ENCODE measurements at regions of chr19 and their contacts with region 1.

Region 1: GRCh38 chr19:10565567-10566407 is at the start of gene KRI1:
- DNase-seq: peak; percentile 97 to 100 (median 99)
- ATAC-seq: peak; percentile 54
- H3K4me3 ChIP-seq: peak within 1 kb of the TSS; percentile 95 to 97
- H3K4me3 Mint-ChIP-seq: peak within 1 kb of the TSS; percentile 98
- H3K27ac ChIP-seq: peak within 1 kb of the TSS; percentile 83 to 85
- H3K27ac Mint-ChIP-seq: peak within 1 kb of the TSS; percentile 95
- H3K4me1 ChIP-seq: peaks cover 28% of the 10 kb centered on the region
- H3K4me1 Mint-ChIP-seq: peaks cover 48% of the 10 kb centered on the region
- H3K27me3 ChIP-seq: no peaks in the 10 kb centered on the region
- H3K27me3 Mint-ChIP-seq: no peaks in the 10 kb centered on the region
- CTCF ChIP-seq: no peak
- total RNA-seq, gene KRI1: 29.8 to 33.9 TPM

Region 2: DNA sequence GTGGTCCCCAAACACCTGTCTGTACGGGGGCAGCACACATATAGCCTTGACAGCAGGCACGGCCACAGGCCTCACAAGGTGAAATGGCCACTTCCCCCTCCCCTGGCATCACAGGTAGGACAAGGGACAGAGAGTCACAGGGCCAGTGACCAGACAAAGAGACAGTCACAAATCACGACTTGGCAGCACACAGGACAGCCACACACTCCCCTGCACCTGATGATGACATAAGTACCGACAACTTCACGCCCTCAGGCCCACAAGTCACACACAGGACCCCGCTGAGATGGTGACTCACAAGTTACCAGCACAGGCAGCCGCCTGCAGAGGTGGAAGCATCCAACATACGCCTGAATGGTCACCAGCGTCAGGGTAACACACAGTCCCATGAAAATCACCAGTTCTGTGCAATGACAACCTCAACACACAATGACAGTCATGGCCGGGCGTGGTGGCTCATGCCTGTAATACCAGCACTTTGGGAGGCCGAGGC is 202.0 kb before region 1 on chr19:
- CTCF ChIA-PET with region 1: no interaction called
- POLR2A ChIA-PET with region 1: no interaction called
- intact Hi-C with region 1: no loop called
- DNase-seq: no peak
- ATAC-seq: no peak
- H3K4me3 ChIP-seq: no peak overlapping the region
- H3K4me3 Mint-ChIP-seq: no peak overlapping the region
- H3K27ac ChIP-seq: no peak overlapping the region
- H3K27ac Mint-ChIP-seq: no peak overlapping the region
- H3K4me1 ChIP-seq: no peaks in the 10 kb centered on the region
- H3K4me1 Mint-ChIP-seq: no peaks in the 10 kb centered on the region
- H3K27me3 ChIP-seq: no peaks in the 10 kb centered on the region
- H3K27me3 Mint-ChIP-seq: no peaks in the 10 kb centered on the region
- CTCF ChIP-seq: no peak

Region 3: DNA sequence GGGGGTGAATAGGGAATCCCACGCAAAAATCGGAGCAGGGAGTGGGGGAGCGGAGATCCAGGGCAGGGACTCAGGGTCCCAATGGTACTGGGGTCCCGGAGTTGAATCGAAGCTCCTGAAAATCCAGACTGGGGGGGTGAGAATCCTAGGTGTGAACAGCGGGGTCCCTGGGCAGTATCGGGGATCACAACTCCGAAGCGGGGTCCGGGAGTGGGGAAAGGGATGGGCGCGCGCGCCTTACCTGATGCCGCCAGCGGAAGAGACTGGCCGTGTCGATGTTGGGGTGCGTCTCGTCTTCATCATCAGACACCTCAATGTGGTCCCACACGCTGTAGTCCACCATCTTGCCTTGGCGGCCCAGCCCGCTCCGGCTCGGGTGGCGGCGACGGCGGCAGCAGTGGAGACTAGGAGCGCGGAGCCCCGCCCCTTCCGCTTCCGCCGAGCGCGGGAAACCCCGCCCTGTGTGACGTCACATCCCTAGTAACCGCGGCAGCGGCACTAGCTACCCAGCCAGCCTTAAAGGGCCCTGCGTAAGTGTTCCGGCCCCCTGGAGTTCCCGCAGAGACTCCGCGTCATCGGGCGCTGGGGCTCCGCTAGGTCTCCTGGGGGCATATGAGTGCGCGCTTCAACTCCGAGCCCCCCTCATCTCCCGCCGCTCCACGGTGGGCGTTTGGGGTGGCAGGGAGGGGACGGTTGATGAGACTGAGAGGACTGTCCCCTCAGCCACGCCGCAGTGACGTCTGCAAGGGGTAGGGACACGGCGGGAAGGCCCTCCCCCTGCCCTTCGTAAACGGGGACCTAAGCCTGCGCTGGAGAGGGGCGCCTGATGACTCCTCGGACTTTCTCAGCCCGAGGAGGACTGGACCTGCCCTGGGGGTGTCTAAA is 162.4 kb before region 1 on chr19 and contains the start of gene CDC37:
- CTCF ChIA-PET with region 1: no interaction called
- POLR2A ChIA-PET with region 1: interaction called, 4 read pairs
- intact Hi-C with region 1: loop called (anchors 2 kb)
- DNase-seq: peak; percentile 96 to 99 (median 98)
- ATAC-seq: peak; percentile 72
- H3K4me3 ChIP-seq: peak within 1 kb of the TSS; percentile 92 to 99
- H3K4me3 Mint-ChIP-seq: peak within 1 kb of the TSS; percentile 95
- H3K27ac ChIP-seq: peak within 1 kb of the TSS; percentile 93 to 95
- H3K27ac Mint-ChIP-seq: peak within 1 kb of the TSS; percentile 94
- H3K4me1 ChIP-seq: peaks cover 73% of the 10 kb centered on the region
- H3K4me1 Mint-ChIP-seq: peaks cover 67% of the 10 kb centered on the region
- H3K27me3 ChIP-seq: peaks cover 0 to 3% of the 10 kb centered on the region in 2 experiments
- H3K27me3 Mint-ChIP-seq: no peaks in the 10 kb centered on the region
- CTCF ChIP-seq: no peak
- total RNA-seq, gene CDC37: 195 to 196 TPM

Region 4: GRCh38 chr19:10543420-10544241 is 22.2 kb before region 1 on chr19 and contains the start of gene ATG4D:
- CTCF ChIA-PET with region 1: interaction called, 55 read pairs
- POLR2A ChIA-PET with region 1: interaction called, 6 read pairs
- intact Hi-C with region 1: loop called (anchors 1 kb)
- DNase-seq: peak; percentile 66 to 91 (median 84)
- ATAC-seq: peak; percentile 86
- H3K4me3 ChIP-seq: peak within 1 kb of the TSS; percentile 82 to 90
- H3K4me3 Mint-ChIP-seq: peak within 1 kb of the TSS; percentile 88
- H3K27ac ChIP-seq: peak within 1 kb of the TSS; percentile 63 to 66
- H3K27ac Mint-ChIP-seq: peak within 1 kb of the TSS; percentile 91
- H3K4me1 ChIP-seq: peaks cover 17% of the 10 kb centered on the region
- H3K4me1 Mint-ChIP-seq: peaks cover 19% of the 10 kb centered on the region
- H3K27me3 ChIP-seq: no peaks in the 10 kb centered on the region
- H3K27me3 Mint-ChIP-seq: peaks cover 7% of the 10 kb centered on the region
- CTCF ChIP-seq: no peak
- total RNA-seq, gene ATG4D: 82.0 to 91.1 TPM

Region 5: GRCh38 chr19:10602330-10603083 is 36.7 kb after region 1 on chr19:
- CTCF ChIA-PET with region 1: no interaction called
- POLR2A ChIA-PET with region 1: interaction called, 4 read pairs
- intact Hi-C with region 1: loop called (anchors 1 to 2 kb)
- DNase-seq: peak; percentile 79 to 94 (median 86)
- ATAC-seq: peak; percentile 82
- H3K4me3 ChIP-seq: peak overlapping the region; percentile 91 to 99
- H3K4me3 Mint-ChIP-seq: peak overlapping the region; percentile 96
- H3K27ac ChIP-seq: peak overlapping the region; percentile 99 to 100
- H3K27ac Mint-ChIP-seq: peak overlapping the region; percentile 99
- H3K4me1 ChIP-seq: peaks cover 38% of the 10 kb centered on the region
- H3K4me1 Mint-ChIP-seq: peaks cover 29% of the 10 kb centered on the region
- H3K27me3 ChIP-seq: no peaks in the 10 kb centered on the region
- H3K27me3 Mint-ChIP-seq: no peaks in the 10 kb centered on the region
- CTCF ChIP-seq: no peak

Region 6: GRCh38 chr19:10615429-10616023 is 49.7 kb after region 1 on chr19:
- CTCF ChIA-PET with region 1: no interaction called
- POLR2A ChIA-PET with region 1: no interaction called
- intact Hi-C with region 1: no loop called
- DNase-seq: peak in 1 of 9 experiments; percentile 43
- ATAC-seq: no peak
- H3K4me3 ChIP-seq: no peak overlapping the region
- H3K4me3 Mint-ChIP-seq: peak overlapping the region; percentile 65
- H3K27ac ChIP-seq: peak overlapping the region in 1 of 2 experiments; percentile 65
- H3K27ac Mint-ChIP-seq: peak overlapping the region; percentile 90
- H3K4me1 ChIP-seq: peaks cover 41% of the 10 kb centered on the region
- H3K4me1 Mint-ChIP-seq: peaks cover 43% of the 10 kb centered on the region
- H3K27me3 ChIP-seq: no peaks in the 10 kb centered on the region
- H3K27me3 Mint-ChIP-seq: no peaks in the 10 kb centered on the region
- CTCF ChIP-seq: no peak

Region 7: DNA sequence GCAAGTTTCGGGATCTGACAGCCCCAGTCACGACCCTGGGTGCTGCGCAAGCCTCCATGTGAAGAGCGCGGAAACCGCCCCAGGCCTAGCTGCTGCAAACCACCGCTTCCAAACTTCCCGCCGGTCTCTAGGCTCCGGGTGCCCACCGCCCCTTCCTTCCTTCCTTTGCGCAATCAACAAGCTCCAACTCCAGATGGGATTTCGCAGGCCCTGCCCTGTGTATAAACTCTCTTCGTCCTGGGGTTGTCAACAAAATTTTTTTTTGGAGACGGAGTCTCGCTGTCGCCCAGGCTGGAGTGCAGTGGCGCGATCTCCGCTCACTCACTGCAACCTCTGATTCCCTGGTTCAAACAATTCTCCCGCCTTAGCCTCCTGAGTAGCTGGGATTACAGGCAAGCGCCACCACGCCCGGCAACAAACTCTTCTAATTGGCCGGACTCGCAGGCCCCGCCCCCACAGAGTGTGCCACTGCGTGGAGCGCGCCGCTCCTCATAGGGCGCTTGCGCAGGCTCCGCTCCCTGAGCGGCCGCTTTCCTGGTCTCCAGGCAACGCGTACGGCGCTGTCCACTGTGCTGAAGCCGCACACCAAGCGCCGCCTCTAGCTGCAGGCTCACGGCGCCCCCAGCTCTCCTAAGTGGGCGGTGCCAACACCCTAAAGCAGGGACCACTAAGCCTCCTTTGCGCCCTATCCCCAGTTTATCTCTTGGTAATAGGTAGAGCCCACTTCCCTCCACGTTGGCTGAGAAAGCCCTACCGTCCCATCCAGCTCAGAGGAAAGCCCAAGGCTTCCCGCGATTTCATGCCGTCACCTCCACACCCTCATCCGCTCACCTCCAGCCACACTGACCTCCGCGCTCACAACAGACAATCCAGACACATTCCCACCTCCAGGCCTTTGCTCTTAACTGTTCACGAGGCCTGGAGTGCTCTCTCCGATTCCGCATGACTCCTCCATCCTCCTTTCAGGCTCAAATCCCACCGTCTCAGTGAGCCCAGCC is 129.9 kb after region 1 on chr19:
- CTCF ChIA-PET with region 1: interaction called, 11 read pairs
- POLR2A ChIA-PET with region 1: interaction called, 3 read pairs
- intact Hi-C with region 1: loop called in 1 of 2 experiments (anchors 5 kb)
- DNase-seq: peak; percentile 77 to 94 (median 87)
- ATAC-seq: peak; percentile 97
- H3K4me3 ChIP-seq: peak overlapping the region; percentile 33 to 58
- H3K4me3 Mint-ChIP-seq: peak overlapping the region; percentile 78
- H3K27ac ChIP-seq: no peak overlapping the region
- H3K27ac Mint-ChIP-seq: no peak overlapping the region
- H3K4me1 ChIP-seq: peaks cover 12% of the 10 kb centered on the region
- H3K4me1 Mint-ChIP-seq: peaks cover 17% of the 10 kb centered on the region
- H3K27me3 ChIP-seq: peaks cover 0 to 2% of the 10 kb centered on the region in 2 experiments
- H3K27me3 Mint-ChIP-seq: peaks cover 5% of the 10 kb centered on the region
- CTCF ChIP-seq: no peak

Region 8: DNA sequence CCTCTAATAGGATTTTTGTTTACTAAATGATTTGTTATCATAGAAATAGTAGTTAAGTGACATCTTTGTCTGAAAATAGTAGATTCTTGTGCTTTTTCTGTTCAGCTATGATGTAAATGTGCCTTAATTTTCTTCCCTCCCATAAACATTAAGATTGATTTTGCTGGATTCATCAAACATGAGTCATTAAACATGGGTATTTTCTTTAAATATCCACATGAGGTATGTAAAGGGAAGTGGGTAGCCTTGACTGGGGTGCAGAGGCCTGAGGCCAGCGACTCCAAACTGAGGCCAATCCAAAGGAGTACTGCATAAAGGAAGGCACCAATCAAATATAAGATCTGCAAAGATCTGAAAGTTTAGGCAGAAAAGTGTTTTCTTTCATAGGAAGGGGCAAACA is 1600.8 kb after region 1 on chr19:
- CTCF ChIA-PET with region 1: no interaction called
- POLR2A ChIA-PET with region 1: no interaction called
- intact Hi-C with region 1: no loop called
- DNase-seq: no peak
- ATAC-seq: no peak
- H3K4me3 ChIP-seq: no peak overlapping the region
- H3K4me3 Mint-ChIP-seq: no peak overlapping the region
- H3K27ac ChIP-seq: no peak overlapping the region
- H3K27ac Mint-ChIP-seq: peak overlapping the region; percentile 77
- H3K4me1 ChIP-seq: peaks cover 21% of the 10 kb centered on the region
- H3K4me1 Mint-ChIP-seq: peaks cover 62% of the 10 kb centered on the region
- H3K27me3 ChIP-seq: no peaks in the 10 kb centered on the region
- H3K27me3 Mint-ChIP-seq: no peaks in the 10 kb centered on the region
- CTCF ChIP-seq: no peak

Measured in CD8-positive, alpha-beta T cell (primary cell).